ENCODE measurements at regions of chr13 and their contacts with region 1.

Region 1: GRCh38 chr13:81713201-81713600 is 1372.3 kb upstream of the SPRY2 start:
- DNase-seq: no peak
- H3K4me3 ChIP-seq: no peak overlapping the region
- H3K27ac ChIP-seq: no peak overlapping the region
- H3K4me1 ChIP-seq: no peaks in the 10 kb centered on the region
- CTCF ChIP-seq: no peak

Region 2: GRCh38 chr13:81800433-81800832 is 87.2 kb after region 1 on chr13:
- CTCF ChIA-PET with region 1: no interaction called
- POLR2A ChIA-PET with region 1: no interaction called
- intact Hi-C with region 1: no loop called
- DNase-seq: no peak
- H3K4me3 ChIP-seq: no peak overlapping the region
- H3K27ac ChIP-seq: no peak overlapping the region
- H3K4me1 ChIP-seq: no peaks in the 10 kb centered on the region
- CTCF ChIP-seq: no peak

Region 3: DNA sequence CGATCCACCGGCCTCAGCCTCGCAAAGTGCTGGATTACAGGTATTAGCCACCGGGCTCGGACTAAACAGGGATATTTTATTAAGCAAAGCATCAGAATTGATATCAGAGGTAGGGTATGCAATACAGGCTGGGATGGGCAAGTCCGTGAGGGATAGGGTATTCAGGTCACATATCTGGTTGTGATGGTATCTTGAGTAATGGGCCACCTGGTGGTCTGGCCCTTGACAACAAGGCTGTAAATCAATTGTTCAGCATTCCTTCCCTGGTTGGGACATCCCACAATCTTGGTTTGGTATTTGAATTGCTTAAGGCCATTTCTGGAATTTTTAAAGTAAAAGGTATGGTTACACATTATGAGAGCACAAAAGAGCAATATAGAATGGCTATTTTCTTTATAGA is 581.0 kb after region 1 on chr13:
- CTCF ChIA-PET with region 1: no interaction called
- POLR2A ChIA-PET with region 1: interaction called, 10 read pairs
- intact Hi-C with region 1: no loop called
- DNase-seq: no peak
- H3K4me3 ChIP-seq: no peak overlapping the region
- H3K27ac ChIP-seq: no peak overlapping the region
- H3K4me1 ChIP-seq: no peaks in the 10 kb centered on the region
- CTCF ChIP-seq: no peak